Natural killer cell (primary cell): ENCODE measurements at regions of chr12 and their contacts with region 1.

Region 1: GRCh38 chr12:79886917-79887519 is 47.9 kb downstream of the PPP1R12A start:
- DNase-seq: peak in 1 of 2 donors; percentile 70
- ATAC-seq: peak; percentile 85 to 95 (median 89)
- H3K4me3 ChIP-seq: no peak overlapping the region
- H3K4me3 Mint-ChIP-seq: no peak overlapping the region
- H3K27ac ChIP-seq: no peak overlapping the region
- H3K27ac Mint-ChIP-seq: peak overlapping the region in 1 of 2 donors; percentile 24
- H3K4me1 ChIP-seq: peaks cover 5% of the 10 kb centered on the region
- H3K4me1 Mint-ChIP-seq: peaks cover 73 to 74% of the 10 kb centered on the region in 2 donors
- H3K27me3 ChIP-seq: no peaks in the 10 kb centered on the region
- H3K27me3 Mint-ChIP-seq: no peaks in the 10 kb centered on the region
- CTCF ChIP-seq: peak; percentile 78

Region 2: GRCh38 chr12:79850610-79851299 is 36.3 kb before region 1 on chr12:
- intact Hi-C with region 1: loop called (anchors 5 kb)
- DNase-seq: no peak
- ATAC-seq: peak in 2 of 3 donors; percentile 55 to 61
- H3K4me3 ChIP-seq: no peak overlapping the region
- H3K4me3 Mint-ChIP-seq: no peak overlapping the region
- H3K27ac ChIP-seq: no peak overlapping the region
- H3K27ac Mint-ChIP-seq: peak overlapping the region; percentile 80 to 81
- H3K4me1 ChIP-seq: peaks cover 13% of the 10 kb centered on the region
- H3K4me1 Mint-ChIP-seq: peaks cover 47 to 63% of the 10 kb centered on the region in 2 donors
- H3K27me3 ChIP-seq: no peaks in the 10 kb centered on the region
- H3K27me3 Mint-ChIP-seq: no peaks in the 10 kb centered on the region
- CTCF ChIP-seq: no peak

Region 3: DNA sequence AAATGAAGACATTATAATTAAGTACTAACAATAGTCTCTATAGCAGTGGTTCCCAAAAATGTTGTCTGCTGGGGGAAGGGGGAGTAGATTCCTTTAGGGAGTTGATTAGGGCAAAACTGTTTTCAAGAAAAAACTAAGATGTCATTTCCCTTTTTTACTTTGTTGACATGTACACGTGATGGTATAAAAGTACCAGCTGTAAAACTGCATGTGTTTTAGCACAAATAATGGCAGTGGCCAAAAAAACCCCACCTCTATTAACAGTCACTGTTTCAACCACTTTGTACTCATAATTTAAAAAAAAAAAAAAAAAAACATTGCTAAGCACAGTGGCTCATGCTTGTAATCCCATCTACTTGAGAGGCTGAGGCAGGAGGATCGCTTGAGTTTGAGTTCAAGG is 13.8 kb before region 1 on chr12:
- intact Hi-C with region 1: no loop called
- DNase-seq: no peak
- ATAC-seq: peak in 1 of 3 donors; percentile 41
- H3K4me3 ChIP-seq: no peak overlapping the region
- H3K4me3 Mint-ChIP-seq: no peak overlapping the region
- H3K27ac ChIP-seq: no peak overlapping the region
- H3K27ac Mint-ChIP-seq: peak overlapping the region; percentile 5 to 77
- H3K4me1 ChIP-seq: peaks cover 4% of the 10 kb centered on the region
- H3K4me1 Mint-ChIP-seq: peaks cover 77 to 85% of the 10 kb centered on the region in 2 donors
- H3K27me3 ChIP-seq: no peaks in the 10 kb centered on the region
- H3K27me3 Mint-ChIP-seq: no peaks in the 10 kb centered on the region
- CTCF ChIP-seq: no peak

Region 4: GRCh38 chr12:79897617-79898016 is 10.6 kb after region 1 on chr12:
- intact Hi-C with region 1: no loop called
- DNase-seq: no peak
- ATAC-seq: no peak
- H3K4me3 ChIP-seq: no peak overlapping the region
- H3K4me3 Mint-ChIP-seq: no peak overlapping the region
- H3K27ac ChIP-seq: no peak overlapping the region
- H3K27ac Mint-ChIP-seq: peak overlapping the region; percentile 2 to 3
- H3K4me1 ChIP-seq: no peaks in the 10 kb centered on the region
- H3K4me1 Mint-ChIP-seq: peaks cover 73 to 83% of the 10 kb centered on the region in 2 donors
- H3K27me3 ChIP-seq: no peaks in the 10 kb centered on the region
- H3K27me3 Mint-ChIP-seq: no peaks in the 10 kb centered on the region
- CTCF ChIP-seq: no peak

Region 5: DNA sequence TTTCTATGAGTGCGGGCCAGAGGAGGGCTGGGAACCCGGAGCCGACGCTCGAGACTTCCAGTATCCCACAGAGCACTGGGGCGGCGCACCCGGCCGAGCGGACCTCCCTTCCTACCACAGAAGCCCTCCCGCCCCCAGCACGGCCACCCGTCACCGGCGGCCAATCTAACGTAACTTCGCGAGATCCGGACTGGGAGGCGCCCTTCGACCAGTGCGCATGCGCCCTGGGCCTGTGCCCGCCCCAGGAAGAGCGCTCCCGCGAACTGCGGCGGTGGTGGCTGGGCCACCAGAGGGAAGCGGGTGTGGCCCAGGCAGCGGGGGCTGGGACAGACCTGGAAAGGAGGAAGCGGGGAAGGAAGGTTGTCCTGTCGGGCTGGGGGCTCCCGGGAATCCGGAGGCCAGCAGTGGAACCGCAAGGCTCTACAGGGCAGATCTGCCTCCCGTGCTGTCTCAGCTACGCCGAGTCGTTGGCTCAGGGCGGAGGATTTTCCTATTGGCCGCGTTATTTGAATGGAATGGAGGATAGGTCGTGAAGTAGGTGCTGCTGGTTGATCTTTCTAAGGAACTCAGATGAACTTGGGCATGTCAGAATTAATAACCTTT is 48.1 kb after region 1 on chr12 and contains the start of gene PPP1R12A:
- intact Hi-C with region 1: loop called (anchors 1 kb)
- DNase-seq: peak; percentile 93 to 98
- ATAC-seq: peak; percentile 82 to 93 (median 88)
- H3K4me3 ChIP-seq: peak within 1 kb of the TSS; percentile 100
- H3K4me3 Mint-ChIP-seq: peak within 1 kb of the TSS; percentile 86
- H3K27ac ChIP-seq: peak within 1 kb of the TSS; percentile 99
- H3K27ac Mint-ChIP-seq: peak within 1 kb of the TSS; percentile 86 to 100
- H3K4me1 ChIP-seq: peaks cover 3% of the 10 kb centered on the region
- H3K4me1 Mint-ChIP-seq: peaks cover 42 to 49% of the 10 kb centered on the region in 2 donors
- H3K27me3 ChIP-seq: no peaks in the 10 kb centered on the region
- H3K27me3 Mint-ChIP-seq: no peaks in the 10 kb centered on the region
- CTCF ChIP-seq: no peak
- total RNA-seq, gene PPP1R12A: 145 to 192 (median 185) TPM

Region 6: GRCh38 chr12:80269803-80270552 is 383.0 kb after region 1 on chr12:
- intact Hi-C with region 1: loop called (anchors 5 kb)
- DNase-seq: peak in 1 of 2 donors; percentile 43
- ATAC-seq: peak in 1 of 3 donors; percentile 57
- H3K4me3 ChIP-seq: no peak overlapping the region
- H3K4me3 Mint-ChIP-seq: no peak overlapping the region
- H3K27ac ChIP-seq: no peak overlapping the region
- H3K27ac Mint-ChIP-seq: no peak overlapping the region
- H3K4me1 ChIP-seq: peaks cover 2% of the 10 kb centered on the region
- H3K4me1 Mint-ChIP-seq: peaks cover 16% of the 10 kb centered on the region in 2 donors
- H3K27me3 ChIP-seq: no peaks in the 10 kb centered on the region
- H3K27me3 Mint-ChIP-seq: peaks cover 0 to 3% of the 10 kb centered on the region in 2 donors
- CTCF ChIP-seq: peak; percentile 80